ENCODE measurements at regions of chr4 and their contacts with region 1.

Region 1: DNA sequence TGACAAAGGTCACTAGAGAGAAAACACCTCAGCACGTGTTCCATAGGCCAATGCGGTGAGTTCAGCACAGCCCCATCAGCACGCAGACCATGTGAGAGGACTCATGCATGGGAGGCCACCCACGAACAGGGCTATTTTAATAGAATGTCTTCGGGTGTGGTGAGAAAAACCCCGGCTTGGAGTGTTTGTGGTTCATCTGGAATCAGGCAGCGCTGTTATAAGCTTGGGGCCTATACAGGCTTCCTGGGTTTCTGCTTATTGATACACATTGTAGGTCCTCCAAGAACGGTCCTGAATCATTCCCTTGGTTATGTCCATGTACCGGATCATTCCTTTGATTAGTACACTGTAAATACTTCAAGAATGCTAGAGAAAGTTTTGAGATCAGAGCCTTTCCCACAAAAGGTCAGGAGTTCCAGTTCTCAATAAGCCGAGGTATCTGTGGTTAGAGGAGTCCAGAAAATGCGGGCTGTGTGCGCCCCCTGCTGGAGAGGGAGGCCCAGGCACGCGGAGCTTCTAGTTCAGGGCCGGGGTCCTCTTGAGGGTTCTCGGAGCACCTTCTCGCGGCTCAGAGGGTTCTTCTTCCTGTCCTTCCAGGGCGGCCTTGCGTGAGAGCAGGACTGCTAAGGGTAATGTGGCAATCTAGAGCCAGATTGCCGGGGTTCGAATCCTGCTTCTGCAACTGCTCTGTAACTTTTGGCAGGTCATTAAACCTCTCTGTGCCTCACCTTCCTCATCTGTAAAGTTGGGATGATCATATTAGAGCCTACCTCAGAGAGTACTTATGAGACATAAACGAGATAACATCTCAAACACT is 51.8 kb downstream of the TLR10 start:
- DNase-seq: peak; percentile 84
- H3K4me3 ChIP-seq: no peak overlapping the region
- H3K27ac ChIP-seq: no peak overlapping the region
- H3K4me1 ChIP-seq: no peaks in the 10 kb centered on the region
- H3K27me3 ChIP-seq: no peaks in the 10 kb centered on the region
- CTCF ChIP-seq: peak; percentile 98

Region 2: DNA sequence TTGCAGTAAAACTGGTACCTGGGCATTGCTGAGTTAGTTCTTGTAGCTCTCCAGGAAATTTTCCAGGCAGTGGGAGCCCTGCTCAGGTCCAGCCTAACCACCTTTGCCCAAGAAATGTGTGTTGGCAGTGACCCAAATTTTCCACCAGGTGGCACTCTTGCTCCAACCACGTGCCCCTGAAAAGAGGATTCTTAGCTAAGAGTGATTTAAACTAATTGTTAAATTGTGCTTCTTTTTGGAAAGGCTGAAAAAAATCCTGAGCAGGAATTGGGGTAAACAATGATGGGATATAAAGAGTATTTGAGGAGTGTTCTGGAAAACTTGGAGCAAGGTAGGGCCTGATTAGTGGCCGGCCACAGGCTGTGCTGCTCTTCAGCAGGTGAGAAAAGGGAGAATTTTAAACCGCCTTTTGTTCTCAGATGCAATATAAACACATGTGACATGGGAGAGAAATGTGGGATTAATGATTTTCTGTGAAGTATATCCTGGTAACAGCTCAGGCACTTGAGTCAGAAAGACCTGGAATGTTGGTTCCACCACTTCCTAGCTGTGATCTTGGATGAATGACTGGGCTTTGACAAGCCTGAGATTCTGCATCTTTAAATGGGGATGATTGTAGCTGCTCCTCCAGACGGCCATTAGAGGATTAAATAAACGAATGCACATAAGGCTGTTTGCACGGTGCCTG is 551.2 kb before region 1 on chr4:
- CTCF ChIA-PET with region 1: interaction called, 33 read pairs
- POLR2A ChIA-PET with region 1: no interaction called
- intact Hi-C with region 1: loop called (anchors 1 kb)
- DNase-seq: peak; percentile 77
- H3K4me3 ChIP-seq: no peak overlapping the region
- H3K27ac ChIP-seq: no peak overlapping the region
- H3K4me1 ChIP-seq: no peaks in the 10 kb centered on the region
- H3K27me3 ChIP-seq: no peaks in the 10 kb centered on the region
- CTCF ChIP-seq: peak; percentile 90

Region 3: GRCh38 chr4:38675146-38676121 is 55.6 kb before region 1 on chr4:
- CTCF ChIA-PET with region 1: no interaction called
- POLR2A ChIA-PET with region 1: no interaction called
- intact Hi-C with region 1: loop called (anchors 2 kb)
- DNase-seq: peak; percentile 89
- H3K4me3 ChIP-seq: no peak overlapping the region
- H3K27ac ChIP-seq: peak overlapping the region; percentile 98
- H3K4me1 ChIP-seq: peaks cover 75% of the 10 kb centered on the region
- H3K27me3 ChIP-seq: no peaks in the 10 kb centered on the region
- CTCF ChIP-seq: peak; percentile 96

Region 4: DNA sequence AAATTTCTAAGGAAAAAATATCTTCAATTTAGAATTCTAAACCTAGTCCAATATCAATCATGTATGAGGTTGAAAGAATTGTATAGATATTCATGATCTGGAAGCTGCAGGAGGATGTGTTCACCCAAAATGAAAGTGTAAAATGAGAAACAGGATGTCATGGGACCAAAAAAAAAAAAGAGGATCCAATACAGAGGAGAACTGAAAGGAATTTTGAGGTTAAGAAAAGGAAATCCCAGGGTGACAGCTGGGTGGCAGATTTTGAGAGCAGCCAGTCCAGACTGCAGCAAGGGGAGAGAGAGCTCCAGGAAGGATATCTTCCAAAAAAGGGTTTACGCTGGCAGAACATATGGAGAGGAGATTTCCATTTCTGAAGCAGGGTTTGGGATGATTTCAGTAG is 12.8 kb after region 1 on chr4:
- CTCF ChIA-PET with region 1: interaction called, 10 read pairs
- POLR2A ChIA-PET with region 1: no interaction called
- intact Hi-C with region 1: no loop called
- DNase-seq: no peak
- H3K4me3 ChIP-seq: no peak overlapping the region
- H3K27ac ChIP-seq: no peak overlapping the region
- H3K4me1 ChIP-seq: no peaks in the 10 kb centered on the region
- H3K27me3 ChIP-seq: no peaks in the 10 kb centered on the region
- CTCF ChIP-seq: no peak

Region 5: GRCh38 chr4:38889143-38889542 is 158.1 kb after region 1 on chr4:
- CTCF ChIA-PET with region 1: no interaction called
- POLR2A ChIA-PET with region 1: no interaction called
- intact Hi-C with region 1: no loop called
- DNase-seq: peak; percentile 56
- H3K4me3 ChIP-seq: no peak overlapping the region
- H3K27ac ChIP-seq: no peak overlapping the region
- H3K4me1 ChIP-seq: peaks cover 8% of the 10 kb centered on the region
- H3K27me3 ChIP-seq: no peaks in the 10 kb centered on the region
- CTCF ChIP-seq: no peak

Region 6: GRCh38 chr4:39004758-39005157 is 273.7 kb after region 1 on chr4:
- CTCF ChIA-PET with region 1: no interaction called
- POLR2A ChIA-PET with region 1: no interaction called
- intact Hi-C with region 1: no loop called
- DNase-seq: no peak
- H3K4me3 ChIP-seq: no peak overlapping the region
- H3K27ac ChIP-seq: no peak overlapping the region
- H3K4me1 ChIP-seq: no peaks in the 10 kb centered on the region
- H3K27me3 ChIP-seq: no peaks in the 10 kb centered on the region
- CTCF ChIP-seq: no peak

Measured in A673 (cell line).